B cell (primary cell): ENCODE measurements at regions of chr17 and their contacts with region 1.

Region 1: GRCh38 chr17:76523084-76524037 is 14.1 kb downstream of the CYGB start:
- DNase-seq: peak; percentile 89
- ATAC-seq: peak; percentile 51
- H3K4me3 ChIP-seq: no peak overlapping the region
- H3K4me3 Mint-ChIP-seq: peak overlapping the region; percentile 61
- H3K27ac ChIP-seq: no peak overlapping the region
- H3K27ac Mint-ChIP-seq: peak overlapping the region; percentile 78
- H3K4me1 ChIP-seq: peaks cover 20 to 31% of the 10 kb centered on the region in 2 donors
- H3K4me1 Mint-ChIP-seq: peaks cover 29% of the 10 kb centered on the region
- H3K27me3 ChIP-seq: peaks cover 0 to 11% (median 1%) of the 10 kb centered on the region in 4 experiments
- H3K27me3 Mint-ChIP-seq: peaks cover 3% of the 10 kb centered on the region
- CTCF ChIP-seq: peak; percentile 99

Region 2: GRCh38 chr17:76467366-76467765 is 56.0 kb before region 1 on chr17 and contains the start of gene AANAT:
- CTCF ChIA-PET with region 1: interaction called, 10 read pairs
- POLR2A ChIA-PET with region 1: interaction called, 5 read pairs
- intact Hi-C with region 1: no loop called
- DNase-seq: no peak
- ATAC-seq: no peak
- H3K4me3 ChIP-seq: no peak within 1 kb of the TSS
- H3K4me3 Mint-ChIP-seq: no peak within 1 kb of the TSS
- H3K27ac ChIP-seq: peak within 1 kb of the TSS in 1 of 2 donors; percentile 23
- H3K27ac Mint-ChIP-seq: peak within 1 kb of the TSS; percentile 84
- H3K4me1 ChIP-seq: peaks cover 12 to 36% of the 10 kb centered on the region in 2 donors
- H3K4me1 Mint-ChIP-seq: peaks cover 35% of the 10 kb centered on the region
- H3K27me3 ChIP-seq: no peaks in the 10 kb centered on the region
- H3K27me3 Mint-ChIP-seq: no peaks in the 10 kb centered on the region
- CTCF ChIP-seq: no peak
- total RNA-seq, gene AANAT: 0.94 TPM in 1 of 2 replicates, not detected in the other

Region 3: DNA sequence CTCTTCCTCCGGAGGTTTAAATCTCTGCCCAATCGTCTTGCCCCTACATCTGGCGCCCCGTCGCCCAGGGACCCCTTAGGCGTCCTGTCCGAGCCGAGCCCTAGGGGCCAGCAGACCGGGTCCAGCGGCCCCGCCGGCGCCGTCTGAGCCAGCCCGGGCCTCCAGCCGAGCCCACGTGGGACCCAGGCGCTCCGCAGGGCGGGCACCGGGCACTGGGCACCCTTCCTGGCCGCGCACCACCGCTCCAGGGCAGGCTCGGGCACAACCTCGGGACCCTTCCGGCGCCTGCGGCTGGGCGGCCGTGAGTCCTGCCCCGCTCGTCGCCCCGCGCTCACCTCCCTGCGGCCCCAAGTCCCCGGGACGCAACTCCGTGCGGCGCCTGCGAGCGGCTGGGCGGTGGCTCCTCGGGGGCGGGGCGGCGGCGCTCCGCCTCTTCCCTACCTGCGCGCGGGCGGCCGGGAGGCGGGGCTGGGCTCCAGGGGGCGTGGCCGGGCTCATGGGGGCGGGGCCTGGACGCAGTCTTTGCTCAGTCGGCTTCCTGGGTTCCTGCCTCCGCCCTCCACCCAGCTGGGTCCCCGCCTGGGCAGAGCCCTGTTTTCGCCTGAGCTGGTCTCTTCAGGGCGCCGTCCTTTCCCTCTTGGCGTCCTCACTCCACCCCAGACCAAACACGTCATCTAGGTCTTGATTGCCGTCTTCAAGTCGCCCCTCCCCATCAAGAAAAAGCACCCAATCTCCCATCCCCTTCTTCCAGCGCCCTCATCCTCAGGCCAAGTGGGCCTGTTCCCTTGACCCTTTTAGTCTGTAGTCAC is 22.1 kb before region 1 on chr17 and contains the start of gene RHBDF2:
- CTCF ChIA-PET with region 1: interaction called, 43 read pairs
- POLR2A ChIA-PET with region 1: interaction called, 13 read pairs
- intact Hi-C with region 1: no loop called
- DNase-seq: peak; percentile 95
- ATAC-seq: peak; percentile 85
- H3K4me3 ChIP-seq: peak within 1 kb of the TSS; percentile 46 to 97 (median 95)
- H3K4me3 Mint-ChIP-seq: peak within 1 kb of the TSS; percentile 97
- H3K27ac ChIP-seq: peak within 1 kb of the TSS; percentile 78 to 94
- H3K27ac Mint-ChIP-seq: peak within 1 kb of the TSS; percentile 99
- H3K4me1 ChIP-seq: peaks cover 38 to 63% of the 10 kb centered on the region in 2 donors
- H3K4me1 Mint-ChIP-seq: peaks cover 56% of the 10 kb centered on the region
- H3K27me3 ChIP-seq: no peaks in the 10 kb centered on the region
- H3K27me3 Mint-ChIP-seq: no peaks in the 10 kb centered on the region
- CTCF ChIP-seq: no peak
- total RNA-seq, gene RHBDF2: 482 and 509 TPM in 2 replicates

Region 4: GRCh38 chr17:76540381-76541300 is 17.3 kb after region 1 on chr17:
- CTCF ChIA-PET with region 1: interaction called, 156 read pairs
- POLR2A ChIA-PET with region 1: interaction called, 7 read pairs
- intact Hi-C with region 1: no loop called
- DNase-seq: peak; percentile 38
- ATAC-seq: peak; percentile 46
- H3K4me3 ChIP-seq: no peak overlapping the region
- H3K4me3 Mint-ChIP-seq: no peak overlapping the region
- H3K27ac ChIP-seq: no peak overlapping the region
- H3K27ac Mint-ChIP-seq: no peak overlapping the region
- H3K4me1 ChIP-seq: peaks cover 15 to 27% of the 10 kb centered on the region in 2 donors
- H3K4me1 Mint-ChIP-seq: peaks cover 18% of the 10 kb centered on the region
- H3K27me3 ChIP-seq: peaks cover 0 to 46% (median 20%) of the 10 kb centered on the region in 4 experiments
- H3K27me3 Mint-ChIP-seq: peaks cover 41% of the 10 kb centered on the region
- CTCF ChIP-seq: no peak

Region 5: DNA sequence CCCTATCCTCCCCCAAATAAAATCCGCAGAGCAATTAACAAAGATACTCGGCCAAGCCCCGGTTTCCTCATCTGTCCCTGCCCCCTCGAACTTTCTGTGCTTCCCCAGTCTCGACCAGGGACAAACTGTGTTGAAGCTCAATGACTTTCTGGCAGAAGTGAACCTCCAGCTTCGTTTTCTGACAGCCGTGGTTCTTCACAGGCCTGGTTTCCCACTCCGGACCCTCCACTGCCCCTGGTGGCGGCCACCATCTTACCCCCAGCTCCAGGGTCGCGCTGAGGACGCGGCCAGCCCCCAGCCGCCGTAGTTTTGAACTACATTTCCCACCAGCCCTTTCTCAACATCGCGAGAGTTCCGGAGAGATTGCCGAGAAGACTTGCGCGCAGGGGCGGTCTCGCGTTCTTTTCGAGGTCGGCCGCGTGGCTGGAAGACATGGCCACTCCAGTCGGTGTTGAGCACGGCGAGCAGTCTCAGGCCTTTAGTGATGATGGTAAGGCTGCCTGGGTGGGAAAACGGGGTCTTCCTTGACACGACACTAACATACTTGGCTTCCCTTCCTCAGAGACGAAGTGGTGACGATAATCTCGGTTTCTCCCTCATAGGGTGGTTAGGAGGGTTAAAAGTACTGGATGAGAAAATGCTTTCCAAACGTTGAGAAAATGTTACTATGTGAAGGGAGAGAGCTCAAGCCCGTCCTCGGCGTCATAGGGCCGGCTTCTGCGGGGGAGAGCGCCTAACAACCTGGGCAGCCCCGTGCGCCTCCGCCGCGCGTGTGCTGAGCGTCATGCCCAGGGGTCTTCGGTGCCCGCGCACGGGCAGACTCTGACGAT is 34.2 kb after region 1 on chr17:
- CTCF ChIA-PET with region 1: interaction called, 32 read pairs
- POLR2A ChIA-PET with region 1: interaction called, 30 read pairs
- intact Hi-C with region 1: loop called (anchors 1 kb)
- DNase-seq: peak; percentile 97
- ATAC-seq: peak; percentile 93
- H3K4me3 ChIP-seq: peak overlapping the region; percentile 76 to 94 (median 88)
- H3K4me3 Mint-ChIP-seq: peak overlapping the region; percentile 100
- H3K27ac ChIP-seq: peak overlapping the region; percentile 81 to 98
- H3K27ac Mint-ChIP-seq: peak overlapping the region; percentile 97
- H3K4me1 ChIP-seq: peaks cover 16 to 37% of the 10 kb centered on the region in 2 donors
- H3K4me1 Mint-ChIP-seq: peaks cover 63% of the 10 kb centered on the region
- H3K27me3 ChIP-seq: no peaks in the 10 kb centered on the region
- H3K27me3 Mint-ChIP-seq: no peaks in the 10 kb centered on the region
- CTCF ChIP-seq: peak; percentile 58

Region 6: GRCh38 chr17:76623271-76624146 is 100.1 kb after region 1 on chr17:
- CTCF ChIA-PET with region 1: interaction called, 89 read pairs
- POLR2A ChIA-PET with region 1: no interaction called
- intact Hi-C with region 1: loop called (anchors 1 kb)
- DNase-seq: peak; percentile 83
- ATAC-seq: peak; percentile 94
- H3K4me3 ChIP-seq: no peak overlapping the region
- H3K4me3 Mint-ChIP-seq: no peak overlapping the region
- H3K27ac ChIP-seq: no peak overlapping the region
- H3K27ac Mint-ChIP-seq: no peak overlapping the region
- H3K4me1 ChIP-seq: peaks cover 0 to 3% of the 10 kb centered on the region in 2 donors
- H3K4me1 Mint-ChIP-seq: peaks cover 2% of the 10 kb centered on the region
- H3K27me3 ChIP-seq: peaks cover 0 to 12% (median 1%) of the 10 kb centered on the region in 4 experiments
- H3K27me3 Mint-ChIP-seq: peaks cover 14% of the 10 kb centered on the region
- CTCF ChIP-seq: peak; percentile 100

Region 7: DNA sequence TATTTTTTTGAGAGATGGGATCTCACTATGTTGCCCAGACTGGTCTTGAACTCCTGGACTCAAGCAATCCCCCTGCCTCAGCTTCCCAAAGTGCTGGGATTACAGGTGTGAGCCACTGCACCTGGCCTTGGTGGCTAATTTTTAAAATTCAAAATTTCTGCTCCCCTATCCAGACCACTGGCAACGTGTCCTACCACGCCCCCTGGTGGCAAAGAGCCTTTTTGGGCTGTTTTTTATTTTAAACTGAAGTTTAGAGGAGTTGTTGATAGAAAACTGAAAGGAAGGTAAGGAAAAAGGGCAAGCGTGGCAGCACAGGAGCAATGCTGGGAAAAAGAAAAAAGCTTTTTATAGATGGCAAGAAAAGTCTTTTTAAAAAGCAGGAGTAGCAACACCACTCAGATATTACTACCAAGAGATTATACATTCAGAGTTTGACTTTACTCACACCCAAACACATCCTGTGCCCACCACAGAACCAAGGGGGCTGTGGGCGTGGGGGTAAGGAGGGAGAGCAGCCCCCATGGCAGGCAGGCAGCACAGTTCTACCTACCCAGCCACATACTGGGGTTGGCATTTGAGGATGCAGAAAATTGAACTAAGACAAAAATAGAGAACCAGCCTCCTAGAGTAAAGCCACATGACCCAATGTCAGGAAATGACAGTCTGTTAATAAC is 191.6 kb after region 1 on chr17:
- CTCF ChIA-PET with region 1: interaction called, 40 read pairs
- POLR2A ChIA-PET with region 1: interaction called, 5 read pairs
- intact Hi-C with region 1: loop called (anchors 2 kb)
- DNase-seq: peak; percentile 75
- ATAC-seq: peak; percentile 7
- H3K4me3 ChIP-seq: peak overlapping the region in 3 of 5 experiments; percentile 11 to 20 (median 12)
- H3K4me3 Mint-ChIP-seq: peak overlapping the region; percentile 62
- H3K27ac ChIP-seq: peak overlapping the region; percentile 46 to 72
- H3K27ac Mint-ChIP-seq: peak overlapping the region; percentile 21
- H3K4me1 ChIP-seq: peaks cover 22 to 31% of the 10 kb centered on the region in 2 donors
- H3K4me1 Mint-ChIP-seq: peaks cover 25% of the 10 kb centered on the region
- H3K27me3 ChIP-seq: no peaks in the 10 kb centered on the region
- H3K27me3 Mint-ChIP-seq: no peaks in the 10 kb centered on the region
- CTCF ChIP-seq: peak; percentile 91